Psoas muscle (tissue), 8 donors: ENCODE measurements at regions of chr5 and their contacts with region 1.

Region 1: DNA sequence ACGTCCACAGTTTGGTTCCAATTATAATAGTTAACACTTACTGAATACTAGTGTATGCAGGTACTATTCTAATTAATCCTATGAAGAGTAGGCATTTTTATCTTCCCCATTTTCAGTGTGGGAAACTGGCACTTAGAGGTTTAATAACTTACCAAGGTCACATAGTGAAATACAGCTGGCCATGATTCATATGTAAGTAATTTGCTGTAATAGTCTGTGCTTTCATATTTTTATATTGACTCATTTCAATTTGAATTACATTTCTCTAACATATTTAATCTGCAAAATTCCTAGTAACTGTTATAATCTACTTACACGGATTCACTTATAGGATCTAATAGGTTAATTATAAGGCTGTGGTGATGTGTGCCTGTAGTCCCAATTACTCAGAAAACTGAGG is 19.4 kb downstream of the CCNH start:
- DNase-seq: no peak
- ATAC-seq: peak in 2 of 4 donors; percentile 47 to 49
- H3K4me3 ChIP-seq: no peak overlapping the region
- H3K27ac ChIP-seq: no peak overlapping the region
- H3K4me1 ChIP-seq: no peaks in the 10 kb centered on the region
- H3K27me3 ChIP-seq: no peaks in the 10 kb centered on the region
- CTCF ChIP-seq: no peak

Region 2: DNA sequence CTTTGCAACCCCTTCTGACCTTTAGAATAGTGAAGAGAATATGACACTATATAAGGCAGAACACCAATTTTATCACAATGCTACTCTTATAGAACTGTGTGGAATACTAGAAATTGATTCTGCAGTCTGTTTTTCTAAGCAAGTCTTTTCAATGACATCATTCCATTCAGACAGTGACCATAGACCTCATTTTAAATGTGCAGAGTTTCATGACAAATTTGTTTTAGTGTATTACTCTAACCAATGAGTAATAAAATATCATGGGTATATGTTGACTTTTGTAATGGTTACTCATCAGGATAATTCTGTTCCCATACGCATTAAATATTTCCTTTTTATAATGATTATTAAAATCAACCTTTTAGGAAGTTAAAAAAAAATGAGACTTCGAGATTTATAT is 555.7 kb before region 1 on chr5:
- intact Hi-C with region 1: no loop called
- DNase-seq: no peak
- ATAC-seq: no peak
- H3K4me3 ChIP-seq: no peak overlapping the region
- H3K27ac ChIP-seq: no peak overlapping the region
- H3K4me1 ChIP-seq: no peaks in the 10 kb centered on the region
- H3K27me3 ChIP-seq: no peaks in the 10 kb centered on the region
- CTCF ChIP-seq: no peak

Region 3: GRCh38 chr5:87069974-87070624 is 323.2 kb before region 1 on chr5:
- intact Hi-C with region 1: loop called in 1 of 2 experiments (anchors 10 kb)
- DNase-seq: no peak
- ATAC-seq: no peak
- H3K4me3 ChIP-seq: no peak overlapping the region
- H3K27ac ChIP-seq: no peak overlapping the region
- H3K4me1 ChIP-seq: no peaks in the 10 kb centered on the region
- H3K27me3 ChIP-seq: no peaks in the 10 kb centered on the region
- CTCF ChIP-seq: peak; percentile 28